ENCODE measurements at regions of chr16 and their contacts with region 1.

Region 1: GRCh38 chr16:81996664-81997622 is 14.3 kb downstream of the SDR42E1 start:
- DNase-seq: no peak
- ATAC-seq: no peak
- H3K4me3 Mint-ChIP-seq: no peak overlapping the region
- H3K27ac Mint-ChIP-seq: no peak overlapping the region
- H3K4me1 Mint-ChIP-seq: peaks cover 1% of the 10 kb centered on the region
- H3K27me3 Mint-ChIP-seq: no peaks in the 10 kb centered on the region

Region 2: GRCh38 chr16:83285921-83286320 is 1289.0 kb after region 1 on chr16:
- CTCF ChIA-PET with region 1: no interaction called
- POLR2A ChIA-PET with region 1: interaction called, 14 read pairs
- intact Hi-C with region 1: no loop called
- DNase-seq: no peak
- ATAC-seq: no peak
- H3K4me3 Mint-ChIP-seq: no peak overlapping the region
- H3K27ac Mint-ChIP-seq: no peak overlapping the region
- H3K4me1 Mint-ChIP-seq: no peaks in the 10 kb centered on the region
- H3K27me3 Mint-ChIP-seq: no peaks in the 10 kb centered on the region